Activated CD4-positive, alpha-beta memory T cell treated with anti-CD3 and anti-CD28 coated beads, Interleukin-2, amount 10 ng/mL, durations not matched to agents 7 days and 5 days (primary cell): ENCODE measurements at regions of chr17 and their contacts with region 1.

Region 1: GRCh38 chr17:46044286-46044928 is 45.4 kb downstream of the STH start:
- DNase-seq: peak; percentile 61
- H3K4me3 Mint-ChIP-seq: no peak overlapping the region
- H3K27ac Mint-ChIP-seq: no peak overlapping the region
- H3K4me1 Mint-ChIP-seq: peaks cover 2% of the 10 kb centered on the region
- H3K27me3 Mint-ChIP-seq: no peaks in the 10 kb centered on the region

Region 2: GRCh38 chr17:46002311-46002972 is 42.0 kb before region 1 on chr17:
- CTCF ChIA-PET with region 1: interaction called, 11 read pairs
- POLR2A ChIA-PET with region 1: no interaction called
- DNase-seq: peak; percentile 80
- H3K4me3 Mint-ChIP-seq: no peak overlapping the region
- H3K27ac Mint-ChIP-seq: no peak overlapping the region
- H3K4me1 Mint-ChIP-seq: peaks cover 2% of the 10 kb centered on the region
- H3K27me3 Mint-ChIP-seq: peaks cover 5% of the 10 kb centered on the region

Region 3: GRCh38 chr17:46027048-46027975 is 17.1 kb before region 1 on chr17:
- CTCF ChIA-PET with region 1: interaction called, 10 read pairs
- POLR2A ChIA-PET with region 1: no interaction called
- DNase-seq: no peak
- H3K4me3 Mint-ChIP-seq: no peak overlapping the region
- H3K27ac Mint-ChIP-seq: no peak overlapping the region
- H3K4me1 Mint-ChIP-seq: peaks cover 25% of the 10 kb centered on the region
- H3K27me3 Mint-ChIP-seq: no peaks in the 10 kb centered on the region